ENCODE measurements at regions of chr4 and their contacts with region 1.

Region 1: DNA sequence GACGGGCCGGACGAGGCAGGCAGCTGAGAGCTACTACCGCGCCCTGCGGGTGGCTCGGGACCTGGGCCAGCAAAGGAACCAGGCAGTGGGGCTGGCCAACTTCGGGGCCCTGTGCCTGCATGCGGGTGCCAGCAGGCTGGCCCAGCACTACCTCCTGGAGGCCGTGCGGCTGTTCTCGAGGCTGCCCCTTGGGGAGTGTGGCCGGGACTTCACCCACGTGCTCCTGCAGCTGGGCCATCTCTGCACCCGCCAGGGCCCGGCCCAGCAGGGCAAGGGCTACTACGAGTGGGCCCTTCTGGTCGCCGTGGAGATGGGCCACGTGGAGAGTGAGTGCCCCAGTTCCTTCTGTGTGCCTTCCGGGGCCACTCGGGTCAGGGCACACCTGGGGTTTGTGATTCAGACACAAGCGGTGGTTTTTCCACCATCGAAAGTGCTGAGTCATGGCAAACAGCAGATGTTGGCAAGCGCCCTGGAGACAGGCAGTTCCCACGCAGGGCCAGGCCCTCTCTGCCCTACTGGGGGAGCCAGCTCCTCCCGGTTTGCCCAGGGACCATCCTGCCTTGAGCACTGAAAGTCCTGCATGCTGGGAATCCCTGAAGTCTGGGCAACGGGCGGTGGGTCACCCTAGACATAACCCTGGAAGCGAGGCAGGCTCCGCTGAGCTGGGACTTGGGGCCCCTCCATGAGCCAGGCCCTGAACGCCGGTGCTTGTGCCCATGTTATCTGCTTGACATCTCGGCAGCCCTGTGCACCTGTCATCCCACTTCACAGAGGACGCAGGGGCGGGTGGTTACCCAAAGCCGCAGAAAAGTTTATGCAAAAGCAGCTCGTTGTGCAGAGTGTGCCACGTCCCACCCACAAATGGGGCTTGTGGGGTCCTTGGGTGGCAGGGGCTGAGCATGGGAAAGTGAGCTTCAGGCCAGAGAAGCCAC is 29.5 kb downstream of the SH3TC1 start:
- DNase-seq: peak; percentile 96
- H3K4me3 Mint-ChIP-seq: no peak overlapping the region
- H3K27ac Mint-ChIP-seq: no peak overlapping the region
- H3K4me1 Mint-ChIP-seq: peaks cover 23% of the 10 kb centered on the region
- H3K27me3 Mint-ChIP-seq: no peaks in the 10 kb centered on the region

Region 2: DNA sequence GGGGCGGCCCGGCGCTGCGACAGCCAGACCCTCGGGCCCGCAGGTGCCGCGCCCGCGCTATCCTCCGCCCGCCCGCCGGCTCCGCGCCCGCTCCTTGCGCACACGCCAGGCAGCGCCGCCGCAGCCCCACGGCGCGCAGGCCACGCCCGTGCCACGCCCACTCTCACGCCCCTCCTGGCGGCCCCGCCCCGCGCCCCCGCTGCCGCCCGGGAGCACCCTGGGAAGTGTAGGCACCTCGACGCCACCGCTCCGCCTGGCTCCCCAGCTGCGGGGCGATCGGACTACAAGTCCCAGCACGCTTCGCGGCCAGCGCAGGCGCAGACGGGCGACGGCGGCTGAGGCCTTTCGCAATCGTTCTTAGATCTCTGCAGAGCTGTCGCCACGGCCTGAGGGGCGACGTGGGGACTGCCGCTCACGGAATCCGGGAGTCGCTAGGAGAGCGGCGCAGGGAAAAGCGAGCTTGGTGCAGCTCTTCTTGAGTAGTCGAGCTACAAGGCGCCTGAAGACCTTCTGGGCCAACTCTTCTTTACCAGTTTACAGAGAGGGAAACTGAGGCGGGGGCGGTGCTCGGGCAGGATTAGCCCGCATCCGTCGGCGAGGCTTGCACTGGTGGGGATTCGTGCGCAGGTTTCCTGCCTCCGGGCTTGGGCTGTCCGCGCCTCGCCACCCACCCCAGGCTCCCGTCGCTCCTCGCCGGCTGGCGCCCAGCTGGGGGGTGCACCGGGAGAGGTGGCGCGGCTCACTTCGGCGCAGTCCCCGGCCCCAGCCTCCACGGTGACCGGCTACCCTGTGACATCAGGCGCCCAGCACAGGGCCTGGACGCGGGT is 69.7 kb before region 1 on chr4 and contains the start of gene ABLIM2:
- CTCF ChIA-PET with region 1: no interaction called
- intact Hi-C with region 1: loop called (anchors 1 kb)
- DNase-seq: peak; percentile 97
- H3K4me3 Mint-ChIP-seq: peak within 1 kb of the TSS; percentile 89
- H3K27ac Mint-ChIP-seq: no peak within 1 kb of the TSS
- H3K4me1 Mint-ChIP-seq: peaks cover 11% of the 10 kb centered on the region
- H3K27me3 Mint-ChIP-seq: peaks cover 4% of the 10 kb centered on the region
- total RNA-seq, gene ABLIM2: 0.22 to 0.24 TPM

Measured in activated naive CD4-positive, alpha-beta T cell treated with anti-CD3 and anti-CD28 coated beads for 36 hours (primary cell).